ENCODE measurements at regions of chr11 and their contacts with region 1.

Region 1: GRCh38 chr11:8688414-8689362 is 6.1 kb downstream of the RPL27A start:
- DNase-seq: peak; percentile 91 to 99 (median 96)
- ATAC-seq: peak; percentile 97
- H3K4me3 ChIP-seq: peak overlapping the region; percentile 52 to 57
- H3K27ac ChIP-seq: peak overlapping the region; percentile 87 to 91
- H3K4me1 ChIP-seq: peaks cover 19 to 47% of the 10 kb centered on the region in 2 donors
- H3K27me3 ChIP-seq: no peaks in the 10 kb centered on the region
- CTCF ChIP-seq: no peak

Region 2: GRCh38 chr11:8867931-8868631 is 179.4 kb after region 1 on chr11:
- intact Hi-C with region 1: loop called in 1 of 2 experiments (anchors 5 kb)
- DNase-seq: no peak
- ATAC-seq: no peak
- H3K4me3 ChIP-seq: no peak overlapping the region
- H3K27ac ChIP-seq: peak overlapping the region in 1 of 2 donors; percentile 70
- H3K4me1 ChIP-seq: peaks cover 21 to 56% of the 10 kb centered on the region in 2 donors
- H3K27me3 ChIP-seq: peaks cover 0 to 41% of the 10 kb centered on the region in 2 donors
- CTCF ChIP-seq: no peak

Region 3: DNA sequence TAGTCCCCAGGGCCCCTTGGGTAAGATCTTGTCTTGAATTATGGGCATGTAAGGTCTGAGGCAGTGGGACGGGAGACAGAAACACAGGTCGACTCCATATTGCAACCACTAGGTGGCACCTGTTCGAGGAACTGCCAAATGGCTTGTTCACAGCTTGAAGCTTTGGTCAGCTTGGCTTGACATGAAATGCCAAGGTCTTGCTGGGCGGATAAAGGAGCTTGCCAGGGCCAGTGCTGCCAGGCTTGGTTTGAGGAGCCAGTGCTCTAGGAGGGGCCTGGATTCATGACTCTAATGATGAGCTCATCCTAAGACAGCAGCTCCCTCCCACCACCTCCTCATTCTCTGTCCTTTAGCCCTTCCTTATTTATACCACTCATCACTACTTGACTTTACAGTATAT is 327.0 kb after region 1 on chr11:
- intact Hi-C with region 1: no loop called
- DNase-seq: peak in 3 of 4 donors; percentile 56 to 77 (median 61)
- ATAC-seq: peak; percentile 92
- H3K4me3 ChIP-seq: no peak overlapping the region
- H3K27ac ChIP-seq: no peak overlapping the region
- H3K4me1 ChIP-seq: peaks cover under 1 to 29% of the 10 kb centered on the region in 2 donors
- H3K27me3 ChIP-seq: no peaks in the 10 kb centered on the region
- CTCF ChIP-seq: peak; percentile 64 to 86

Measured in left lung (tissue), 14 donors.